OCI-LY7 (cell line): ENCODE measurements at regions of chr15 and their contacts with region 1.

Region 1: GRCh38 chr15:68852461-68852860 is 31.8 kb upstream of the ANP32A start:
- DNase-seq: no peak
- H3K4me3 ChIP-seq: peak overlapping the region; percentile 51
- H3K27ac ChIP-seq: peak overlapping the region; percentile 97
- H3K4me1 ChIP-seq: peaks cover 79% of the 10 kb centered on the region
- CTCF ChIP-seq: peak; percentile 43; the same call in 1 of the 2 replicates

Region 2: DNA sequence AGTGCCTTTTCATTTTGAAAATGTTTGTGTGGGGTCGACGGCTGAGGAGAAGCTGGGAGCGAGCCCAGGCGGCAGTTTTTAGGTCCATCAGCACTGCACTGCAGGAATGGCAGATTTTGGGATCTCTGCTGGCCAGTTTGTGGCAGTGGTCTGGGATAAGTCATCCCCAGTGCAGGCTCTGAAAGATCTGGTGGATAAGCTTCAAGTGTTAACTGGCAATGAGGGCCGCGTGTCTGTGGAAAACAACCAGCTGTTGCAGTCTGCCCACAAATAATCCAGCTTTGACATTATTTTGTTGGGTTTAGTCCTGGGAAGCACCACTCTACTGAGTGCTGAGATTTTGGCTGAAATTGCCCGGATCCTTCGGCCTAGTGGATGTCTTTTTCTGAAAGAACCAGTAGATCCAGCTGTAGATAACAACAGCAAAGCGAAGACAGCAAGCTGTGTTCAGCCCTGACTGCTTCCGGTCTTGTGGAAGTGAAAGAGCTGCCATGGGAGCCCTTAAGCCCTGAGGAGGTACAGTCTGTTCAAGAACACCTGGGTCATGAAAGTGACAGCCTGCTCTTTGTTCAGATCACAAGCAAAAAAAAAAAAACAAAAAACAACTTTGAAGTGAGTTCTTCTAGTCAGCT is 18.6 kb before region 1 on chr15:
- CTCF ChIA-PET with region 1: interaction called, 6 read pairs
- POLR2A ChIA-PET with region 1: interaction called, 42 read pairs
- intact Hi-C with region 1: no loop called
- DNase-seq: peak; percentile 97
- H3K4me3 ChIP-seq: peak overlapping the region; percentile 29
- H3K27ac ChIP-seq: peak overlapping the region; percentile 92
- H3K4me1 ChIP-seq: peaks cover 54% of the 10 kb centered on the region
- CTCF ChIP-seq: no peak

Region 3: GRCh38 chr15:68868296-68868695 is 15.8 kb after region 1 on chr15:
- CTCF ChIA-PET with region 1: interaction called, 3 read pairs
- POLR2A ChIA-PET with region 1: interaction called, 11 read pairs
- intact Hi-C with region 1: no loop called
- DNase-seq: no peak
- H3K4me3 ChIP-seq: no peak overlapping the region
- H3K27ac ChIP-seq: no peak overlapping the region
- H3K4me1 ChIP-seq: peaks cover 30% of the 10 kb centered on the region
- CTCF ChIP-seq: no peak